Activated CD4-positive, alpha-beta T cell treated with anti-CD3 and anti-CD28 coated beads for 36 hours (primary cell): ENCODE measurements at regions of chr13 and their contacts with region 1.

Region 1: DNA sequence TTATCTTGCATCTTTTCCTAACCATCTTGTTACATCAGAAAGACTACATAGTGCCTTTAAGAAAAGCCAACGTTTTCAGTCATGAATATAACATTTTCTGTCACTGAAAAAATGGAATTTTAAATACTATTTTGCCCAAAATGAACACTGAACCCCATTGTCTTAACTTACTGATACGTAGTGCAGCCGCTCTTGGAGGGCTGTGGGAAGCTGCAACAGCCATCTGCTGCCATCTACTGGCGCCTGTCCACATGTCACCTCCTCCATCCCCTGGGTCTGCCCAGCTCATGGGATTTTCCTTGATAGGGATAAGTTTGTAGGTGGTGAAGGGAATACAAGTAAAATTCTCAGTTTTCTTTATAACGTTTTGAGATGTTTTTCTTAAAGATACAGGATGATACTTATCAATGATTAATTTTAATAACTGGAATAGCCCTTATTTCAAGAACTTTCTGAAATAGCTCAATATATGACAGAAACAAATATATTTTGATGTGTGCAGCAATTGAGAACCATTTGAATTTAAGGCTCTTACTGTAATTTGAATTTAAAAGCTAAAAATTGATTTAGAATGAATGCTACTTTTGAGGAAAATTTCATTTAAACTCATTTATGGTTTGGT is 73.7 kb downstream of the GGACT start:
- DNase-seq: peak; percentile 86
- ATAC-seq: peak; percentile 94
- H3K4me3 Mint-ChIP-seq: no peak overlapping the region
- H3K27ac Mint-ChIP-seq: no peak overlapping the region
- H3K4me1 Mint-ChIP-seq: peaks cover 10% of the 10 kb centered on the region
- H3K27me3 Mint-ChIP-seq: peaks cover 2% of the 10 kb centered on the region

Region 2: DNA sequence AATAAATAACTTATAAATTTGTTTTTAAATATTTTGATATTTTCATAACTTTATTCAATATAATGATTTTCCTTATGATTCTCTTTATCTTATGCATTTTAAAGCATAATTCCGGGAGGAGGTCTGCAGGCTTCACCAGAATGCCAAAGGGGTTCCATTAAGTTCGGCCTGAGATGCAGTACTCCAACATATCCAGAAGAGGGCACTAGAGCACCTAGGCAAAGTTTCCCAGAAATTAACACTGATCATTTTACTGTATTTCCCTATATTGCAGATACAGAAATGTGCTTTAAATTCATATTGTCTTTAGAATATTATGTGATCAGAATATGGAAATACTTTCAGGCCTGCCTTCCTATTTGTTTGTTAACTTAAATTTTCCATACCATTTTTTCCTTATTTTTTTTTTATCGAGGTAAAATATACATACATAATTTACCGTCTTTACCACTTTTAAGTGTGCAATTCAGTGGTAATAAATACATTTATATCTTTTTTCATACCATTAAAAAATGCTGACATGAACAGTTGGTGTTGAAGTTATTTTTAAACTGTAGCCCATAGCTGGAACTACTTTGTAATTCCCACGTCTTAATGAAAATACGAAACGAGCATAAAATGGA is 1072.5 kb before region 1 on chr13:
- CTCF ChIA-PET with region 1: no interaction called
- POLR2A ChIA-PET with region 1: no interaction called
- intact Hi-C with region 1: loop called in 1 of 2 experiments (anchors 5 kb)
- DNase-seq: peak; percentile 61
- ATAC-seq: peak; percentile 61
- H3K4me3 Mint-ChIP-seq: no peak overlapping the region
- H3K27ac Mint-ChIP-seq: no peak overlapping the region
- H3K4me1 Mint-ChIP-seq: peaks cover 9% of the 10 kb centered on the region
- H3K27me3 Mint-ChIP-seq: peaks cover 2% of the 10 kb centered on the region

Region 3: DNA sequence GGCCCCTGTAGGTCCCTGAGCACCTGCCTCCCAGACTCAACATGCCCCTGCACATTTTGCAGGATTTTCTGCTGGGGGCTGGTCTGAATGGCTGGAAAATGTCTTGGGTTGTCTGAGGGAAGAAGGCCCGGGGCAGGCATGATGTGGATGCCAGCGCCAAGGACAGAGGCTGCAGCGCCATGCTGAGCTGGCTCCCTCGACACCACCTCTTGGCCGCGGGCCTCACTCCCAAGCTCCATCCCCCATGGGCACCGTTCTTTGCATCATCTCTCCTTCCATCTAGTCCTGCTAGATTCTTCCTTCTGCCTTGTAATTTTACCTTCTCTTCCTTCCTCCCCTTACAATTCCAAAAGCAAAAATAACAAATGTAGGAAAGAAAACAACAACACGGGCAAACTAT is 613.9 kb before region 1 on chr13:
- CTCF ChIA-PET with region 1: interaction called, 8 read pairs
- POLR2A ChIA-PET with region 1: no interaction called
- intact Hi-C with region 1: loop called (anchors 1 kb)
- DNase-seq: no peak
- ATAC-seq: no peak
- H3K4me3 Mint-ChIP-seq: no peak overlapping the region
- H3K27ac Mint-ChIP-seq: no peak overlapping the region
- H3K4me1 Mint-ChIP-seq: no peaks in the 10 kb centered on the region
- H3K27me3 Mint-ChIP-seq: peaks cover 49% of the 10 kb centered on the region

Region 4: DNA sequence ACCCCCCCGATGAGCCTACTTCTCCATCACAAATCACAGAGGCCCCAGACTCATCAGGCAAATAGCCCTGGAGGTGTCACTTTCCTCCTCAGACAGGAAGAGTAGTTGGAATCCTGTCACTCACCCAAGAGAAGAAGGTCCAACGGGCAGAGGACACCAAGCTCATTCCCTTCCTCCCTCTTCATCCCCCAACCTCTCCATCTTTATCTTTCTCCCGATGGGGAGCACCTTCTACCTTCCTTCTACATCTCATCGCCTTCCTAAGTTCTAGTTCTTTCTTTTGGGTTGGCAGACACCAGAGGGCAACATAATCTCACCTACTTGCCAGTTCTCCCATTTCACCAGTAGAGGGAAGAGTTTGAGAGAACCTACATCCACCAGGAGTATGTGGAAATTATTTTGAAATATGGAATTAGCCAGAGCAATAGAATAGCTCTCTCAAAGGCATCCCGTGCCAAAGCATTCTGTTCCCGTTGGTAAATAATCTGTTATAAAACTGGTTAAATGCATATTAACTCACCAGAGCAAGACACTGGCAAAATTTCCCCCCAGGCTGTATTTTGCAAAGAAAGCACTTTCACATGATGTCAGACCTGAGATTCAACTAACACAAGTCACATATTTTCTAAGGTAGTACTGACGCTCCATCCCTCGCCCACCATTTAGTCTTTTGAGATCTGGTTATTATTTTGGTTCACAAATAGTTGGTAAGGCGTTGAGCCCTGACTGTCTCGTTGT is 598.4 kb before region 1 on chr13:
- CTCF ChIA-PET with region 1: interaction called, 9 read pairs
- POLR2A ChIA-PET with region 1: no interaction called
- intact Hi-C with region 1: loop called (anchors 1 kb)
- DNase-seq: peak; percentile 21
- ATAC-seq: peak; percentile 83
- H3K4me3 Mint-ChIP-seq: no peak overlapping the region
- H3K27ac Mint-ChIP-seq: no peak overlapping the region
- H3K4me1 Mint-ChIP-seq: peaks cover 8% of the 10 kb centered on the region
- H3K27me3 Mint-ChIP-seq: peaks cover 10% of the 10 kb centered on the region

Region 5: DNA sequence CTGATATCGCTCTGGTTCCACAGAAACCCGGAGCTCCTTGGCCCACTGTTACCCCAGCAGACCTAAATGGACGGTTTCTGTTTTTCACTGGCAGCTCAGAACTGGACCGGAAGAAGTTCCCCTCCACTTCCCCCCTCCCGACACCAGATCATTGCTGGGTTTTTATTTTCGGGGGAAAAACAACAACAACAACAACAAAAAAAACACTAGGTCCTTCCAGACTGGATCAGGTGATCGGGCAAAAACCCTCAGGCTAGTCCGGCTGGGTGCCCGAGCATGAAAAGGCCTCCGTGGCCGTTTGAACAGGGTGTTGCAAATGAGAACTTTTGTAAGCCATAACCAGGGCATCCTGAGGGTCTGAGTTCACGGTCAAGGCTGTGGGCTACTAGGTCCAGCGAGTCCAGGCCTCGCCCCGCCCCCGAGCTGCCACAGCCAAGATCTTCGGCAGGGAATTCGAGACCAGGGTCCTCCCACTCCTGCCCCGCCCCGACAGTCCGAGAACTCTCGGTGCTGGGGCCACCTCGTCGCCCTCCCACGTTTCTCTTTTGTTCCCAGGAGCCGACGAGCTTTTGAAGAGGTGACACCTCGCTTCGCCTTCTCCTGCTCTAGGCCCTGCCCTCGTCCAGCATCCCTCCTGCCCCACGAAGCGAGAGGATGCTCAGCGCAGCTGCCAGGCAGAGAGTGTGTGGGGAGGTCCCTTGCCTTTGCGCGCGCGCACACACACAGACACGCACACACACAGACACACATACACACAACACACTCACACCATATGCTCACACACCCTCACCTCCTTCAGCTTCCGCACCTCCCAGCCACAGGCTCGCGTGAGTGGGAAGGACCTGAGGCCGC is 524.5 kb before region 1 on chr13:
- CTCF ChIA-PET with region 1: interaction called, 3 read pairs
- POLR2A ChIA-PET with region 1: no interaction called
- intact Hi-C with region 1: loop called (anchors 5 to 10 kb)
- DNase-seq: peak; percentile 31
- ATAC-seq: peak; percentile 73
- H3K4me3 Mint-ChIP-seq: peak overlapping the region; percentile 6
- H3K27ac Mint-ChIP-seq: no peak overlapping the region
- H3K4me1 Mint-ChIP-seq: peaks cover 27% of the 10 kb centered on the region
- H3K27me3 Mint-ChIP-seq: peaks cover 86% of the 10 kb centered on the region

Region 6: GRCh38 chr13:100209857-100210825 is 304.8 kb before region 1 on chr13:
- CTCF ChIA-PET with region 1: interaction called, 3 read pairs
- POLR2A ChIA-PET with region 1: no interaction called
- intact Hi-C with region 1: loop called in 1 of 2 experiments (anchors 1 kb)
- DNase-seq: no peak
- ATAC-seq: peak; percentile 65
- H3K4me3 Mint-ChIP-seq: no peak overlapping the region
- H3K27ac Mint-ChIP-seq: no peak overlapping the region
- H3K4me1 Mint-ChIP-seq: peaks cover 5% of the 10 kb centered on the region
- H3K27me3 Mint-ChIP-seq: no peaks in the 10 kb centered on the region

Region 7: DNA sequence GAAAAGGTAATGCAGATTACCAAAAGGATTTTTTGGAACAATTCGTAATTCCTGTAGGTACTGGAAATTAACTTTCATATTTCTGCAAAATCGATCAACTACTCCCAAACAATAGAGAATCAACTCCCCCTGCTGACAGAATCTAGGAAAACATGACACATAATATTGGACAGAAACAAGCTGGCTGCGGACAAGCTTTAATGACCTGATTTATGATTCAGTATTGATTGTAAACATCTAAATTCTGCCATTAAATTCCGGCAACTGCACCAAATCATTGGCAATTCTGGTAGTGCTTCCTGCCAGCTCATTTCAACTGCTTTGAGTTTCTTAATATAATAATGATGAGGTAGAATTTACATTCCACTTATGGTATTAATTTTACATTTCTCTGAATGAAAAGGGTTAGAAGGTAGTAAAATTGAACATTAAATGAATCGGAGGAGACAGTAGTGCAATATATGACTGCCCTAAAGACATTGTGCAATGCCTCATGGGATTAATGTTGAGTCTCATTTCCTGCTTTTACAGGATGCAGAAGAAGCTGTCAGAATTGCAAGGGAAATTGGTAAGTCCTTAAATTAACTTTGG is 279.5 kb before region 1 on chr13:
- CTCF ChIA-PET with region 1: interaction called, 7 read pairs
- POLR2A ChIA-PET with region 1: no interaction called
- intact Hi-C with region 1: loop called (anchors 2 kb)
- DNase-seq: no peak
- ATAC-seq: no peak
- H3K4me3 Mint-ChIP-seq: no peak overlapping the region
- H3K27ac Mint-ChIP-seq: no peak overlapping the region
- H3K4me1 Mint-ChIP-seq: peaks cover 3% of the 10 kb centered on the region
- H3K27me3 Mint-ChIP-seq: no peaks in the 10 kb centered on the region